Adrenal gland (tissue), 19 donors: ENCODE measurements at regions of chr4 and their contacts with region 1.

Region 1: DNA sequence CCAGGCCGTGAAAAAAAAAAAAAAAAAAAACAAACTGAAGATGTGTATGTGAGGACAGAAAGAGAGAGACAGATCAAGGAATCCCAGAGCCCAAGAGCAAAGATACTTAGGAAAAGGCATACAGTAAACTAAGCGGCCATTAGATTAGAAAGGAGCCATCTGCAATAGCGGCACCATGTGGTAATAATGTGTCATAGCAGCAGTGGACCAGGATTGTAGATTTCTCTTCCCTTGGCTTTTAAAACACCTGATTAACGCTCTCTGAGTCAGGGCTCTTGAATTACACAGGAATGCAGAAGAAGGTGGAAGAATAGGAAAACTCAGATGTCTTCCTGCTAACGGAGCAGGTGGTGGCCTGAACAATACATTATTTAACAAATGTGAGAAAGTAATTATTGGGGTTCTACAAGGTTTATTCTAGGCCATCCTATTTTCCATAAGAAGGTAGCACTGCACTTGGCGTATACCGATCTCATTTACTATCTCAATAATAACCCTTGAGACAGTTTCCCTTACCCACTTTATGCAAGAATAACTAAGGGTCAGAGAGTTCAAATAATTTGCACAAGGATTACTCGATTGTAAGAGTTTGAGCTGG is 182.7 kb downstream of the KCNIP4 start:
- DNase-seq: peak; percentile 21 to 78 (median 45)
- H3K4me3 ChIP-seq: no peak overlapping the region
- H3K27ac ChIP-seq: no peak overlapping the region
- H3K4me1 ChIP-seq: no peaks in the 10 kb centered on the region
- H3K27me3 ChIP-seq: no peaks in the 10 kb centered on the region
- CTCF ChIP-seq: peak; percentile 62 to 87 (median 80)
- POLR2A ChIP-seq: no peak

Region 2: GRCh38 chr4:21242163-21242562 is 523.7 kb before region 1 on chr4:
- intact Hi-C with region 1: no loop called
- DNase-seq: no peak
- H3K4me3 ChIP-seq: no peak overlapping the region
- H3K27ac ChIP-seq: no peak overlapping the region
- H3K4me1 ChIP-seq: no peaks in the 10 kb centered on the region
- H3K27me3 ChIP-seq: no peaks in the 10 kb centered on the region
- CTCF ChIP-seq: no peak
- POLR2A ChIP-seq: no peak

Region 3: GRCh38 chr4:21512353-21512752 is 253.6 kb before region 1 on chr4:
- intact Hi-C with region 1: loop called (anchors 2 to 5 kb)
- DNase-seq: peak in 3 of 7 donors; percentile 5 to 21 (median 17)
- H3K4me3 ChIP-seq: no peak overlapping the region
- H3K27ac ChIP-seq: no peak overlapping the region
- H3K4me1 ChIP-seq: no peaks in the 10 kb centered on the region
- H3K27me3 ChIP-seq: no peaks in the 10 kb centered on the region
- CTCF ChIP-seq: peak; percentile 15 to 68 (median 62)
- POLR2A ChIP-seq: no peak

Region 4: GRCh38 chr4:21517460-21517859 is 248.4 kb before region 1 on chr4:
- intact Hi-C with region 1: loop called in 1 of 2 experiments (anchors 5 kb)
- DNase-seq: no peak
- H3K4me3 ChIP-seq: no peak overlapping the region
- H3K27ac ChIP-seq: no peak overlapping the region
- H3K4me1 ChIP-seq: no peaks in the 10 kb centered on the region
- H3K27me3 ChIP-seq: no peaks in the 10 kb centered on the region
- CTCF ChIP-seq: no peak
- POLR2A ChIP-seq: no peak